Activated CD4-positive, alpha-beta memory T cell treated with anti-CD3 and anti-CD28 coated beads for 36 hours (primary cell): ENCODE measurements at regions of chr2 and their contacts with region 1.

Region 1: GRCh38 chr2:11863513-11864328 is 117.3 kb downstream of the LPIN1 start:
- DNase-seq: peak; percentile 76
- H3K4me3 Mint-ChIP-seq: peak overlapping the region; percentile 25
- H3K27ac Mint-ChIP-seq: no peak overlapping the region
- H3K4me1 Mint-ChIP-seq: peaks cover 41% of the 10 kb centered on the region
- H3K27me3 Mint-ChIP-seq: no peaks in the 10 kb centered on the region

Region 2: DNA sequence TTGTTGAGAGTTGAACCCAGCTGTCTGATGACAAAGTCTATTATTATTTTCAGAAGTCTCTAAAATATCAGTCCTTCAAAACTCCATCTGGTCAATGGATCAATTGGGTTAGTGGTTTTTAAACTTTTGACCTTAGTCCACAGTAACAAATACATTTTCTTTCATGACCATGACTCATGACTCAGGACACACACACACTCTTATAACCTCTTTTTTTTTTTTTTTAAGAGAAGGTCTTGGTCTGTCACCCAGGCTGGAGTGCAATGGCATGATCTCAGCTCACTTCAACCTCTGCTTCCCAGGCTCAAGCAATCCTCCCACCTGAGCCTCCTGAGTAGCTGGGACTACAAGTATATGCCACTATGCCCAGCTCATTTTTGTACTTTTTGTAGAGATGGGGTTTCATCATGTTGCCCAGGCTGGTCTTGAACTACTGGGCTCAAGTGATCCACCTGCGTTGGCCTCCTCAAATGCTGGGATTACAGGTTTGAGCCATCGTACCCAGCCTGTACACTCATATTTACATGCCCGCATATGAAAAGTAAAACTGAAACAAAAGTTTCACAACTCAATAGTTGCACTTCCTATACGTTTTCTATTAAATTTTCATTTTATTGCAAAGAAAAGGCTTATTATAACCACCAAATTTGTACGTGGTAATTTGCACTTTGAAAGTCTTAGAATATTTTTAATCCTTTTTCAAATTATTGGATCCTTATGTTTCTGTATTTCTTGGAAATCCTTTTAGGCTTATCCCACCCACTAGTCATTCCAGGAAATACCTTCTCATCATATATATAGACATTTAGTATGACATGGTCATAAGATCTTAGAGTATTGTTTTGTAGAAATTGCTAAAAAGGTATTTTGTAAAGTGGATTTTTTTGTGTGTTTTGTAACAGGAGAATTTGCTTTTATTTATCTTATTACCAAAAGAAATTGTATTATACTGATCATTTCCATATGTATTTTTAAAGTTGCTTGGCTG is 81.7 kb after region 1 on chr2:
- CTCF ChIA-PET with region 1: no interaction called
- POLR2A ChIA-PET with region 1: no interaction called
- intact Hi-C with region 1: loop called (anchors 5 kb)
- DNase-seq: peak; percentile 54
- H3K4me3 Mint-ChIP-seq: no peak overlapping the region
- H3K27ac Mint-ChIP-seq: no peak overlapping the region
- H3K4me1 Mint-ChIP-seq: peaks cover 12% of the 10 kb centered on the region
- H3K27me3 Mint-ChIP-seq: no peaks in the 10 kb centered on the region

Region 3: DNA sequence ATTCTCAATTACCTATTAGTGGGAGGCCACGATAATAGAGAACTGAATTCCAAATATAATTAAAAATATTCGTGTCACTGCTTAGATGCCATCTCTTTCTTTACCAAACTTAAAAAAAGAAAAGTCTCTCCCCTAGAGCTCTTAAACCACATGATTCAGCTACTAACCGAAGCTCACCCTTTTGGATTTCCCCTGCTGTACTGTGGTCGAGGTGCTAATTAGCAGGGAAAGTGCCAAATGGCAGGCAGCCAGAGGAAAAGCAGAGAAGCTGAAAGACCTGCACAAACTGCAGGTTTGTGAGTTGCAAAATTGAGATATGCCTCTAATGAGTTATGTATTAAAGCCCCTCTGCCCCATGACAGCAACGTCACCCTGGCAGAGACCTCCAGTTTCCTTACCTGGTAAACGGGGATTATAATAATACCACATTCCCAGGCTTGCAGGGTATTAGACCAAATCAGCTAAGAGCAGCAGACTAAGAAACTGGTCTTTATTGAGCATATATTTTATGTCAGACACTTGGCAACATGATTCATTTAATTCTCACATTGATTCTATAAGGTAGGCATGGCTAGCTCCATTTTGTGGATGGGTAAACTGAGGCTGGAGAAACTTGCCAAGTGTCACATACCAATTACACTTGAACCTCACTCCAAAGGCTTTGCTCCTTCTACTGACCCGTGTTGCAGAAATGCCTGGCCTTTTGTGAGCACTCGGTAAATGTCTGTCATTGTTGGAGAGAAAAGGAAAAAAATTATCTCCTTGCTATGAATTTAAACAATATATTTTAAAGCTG is 142.4 kb after region 1 on chr2:
- CTCF ChIA-PET with region 1: interaction called, 4 read pairs
- POLR2A ChIA-PET with region 1: no interaction called
- intact Hi-C with region 1: loop called (anchors 2 kb)
- DNase-seq: peak; percentile 83
- H3K4me3 Mint-ChIP-seq: peak overlapping the region; percentile 3
- H3K27ac Mint-ChIP-seq: no peak overlapping the region
- H3K4me1 Mint-ChIP-seq: peaks cover 22% of the 10 kb centered on the region
- H3K27me3 Mint-ChIP-seq: peaks cover 62% of the 10 kb centered on the region